Naive thymus-derived CD4-positive, alpha-beta T cell (primary cell): ENCODE measurements at regions of chr10 and their contacts with region 1.

Region 1: GRCh38 chr10:87817609-87818504 is at the start of gene ATAD1:
- DNase-seq: peak; percentile 79 to 93 (median 91)
- ATAC-seq: peak; percentile 92
- H3K4me3 ChIP-seq: peak within 1 kb of the TSS; percentile 75
- H3K4me3 Mint-ChIP-seq: peak within 1 kb of the TSS; percentile 90 to 100 (median 94)
- H3K27ac ChIP-seq: peak within 1 kb of the TSS; percentile 89
- H3K27ac Mint-ChIP-seq: peak within 1 kb of the TSS; percentile 93 to 100 (median 98)
- H3K4me1 ChIP-seq: peaks cover 13 to 33% of the 10 kb centered on the region in 2 donors
- H3K4me1 Mint-ChIP-seq: peaks cover 22 to 56% (median 41%) of the 10 kb centered on the region in 7 donors
- H3K27me3 ChIP-seq: no peaks in the 10 kb centered on the region
- H3K27me3 Mint-ChIP-seq: peaks cover 0 to 2% (median 0%) of the 10 kb centered on the region in 5 donors
- total RNA-seq, gene ATAD1: 33.5 to 53.4 (median 46.1) TPM

Region 2: GRCh38 chr10:86521678-86522509 is 1296.0 kb before region 1 on chr10 and contains the start of gene WAPL:
- CTCF ChIA-PET with region 1: no interaction called
- POLR2A ChIA-PET with region 1: no interaction called
- intact Hi-C with region 1: loop called in 1 of 2 experiments (anchors 1 kb)
- DNase-seq: peak; percentile 91 to 98 (median 94)
- ATAC-seq: peak; percentile 98
- H3K4me3 ChIP-seq: peak within 1 kb of the TSS; percentile 85
- H3K4me3 Mint-ChIP-seq: peak within 1 kb of the TSS; percentile 86 to 99 (median 96)
- H3K27ac ChIP-seq: peak within 1 kb of the TSS; percentile 97
- H3K27ac Mint-ChIP-seq: peak within 1 kb of the TSS; percentile 83 to 96 (median 94)
- H3K4me1 ChIP-seq: peaks cover 32 to 38% of the 10 kb centered on the region in 2 donors
- H3K4me1 Mint-ChIP-seq: peaks cover 41 to 75% (median 56%) of the 10 kb centered on the region in 7 donors
- H3K27me3 ChIP-seq: no peaks in the 10 kb centered on the region
- H3K27me3 Mint-ChIP-seq: no peaks in the 10 kb centered on the region
- total RNA-seq, gene WAPL: 40.3 to 59.2 (median 53.4) TPM

Region 3: GRCh38 chr10:87842776-87843497 is 25.1 kb after region 1 on chr10:
- CTCF ChIA-PET with region 1: no interaction called
- POLR2A ChIA-PET with region 1: interaction called, 6 read pairs
- intact Hi-C with region 1: loop called in 1 of 2 experiments (anchors 2 kb)
- DNase-seq: no peak
- ATAC-seq: no peak
- H3K4me3 ChIP-seq: no peak overlapping the region
- H3K4me3 Mint-ChIP-seq: peak overlapping the region in 1 of 10 donors; percentile 10
- H3K27ac ChIP-seq: no peak overlapping the region
- H3K27ac Mint-ChIP-seq: peak overlapping the region in 1 of 9 donors; percentile 74
- H3K4me1 ChIP-seq: no peaks in the 10 kb centered on the region
- H3K4me1 Mint-ChIP-seq: peaks cover 0 to 16% (median 0%) of the 10 kb centered on the region in 7 donors
- H3K27me3 ChIP-seq: no peaks in the 10 kb centered on the region
- H3K27me3 Mint-ChIP-seq: peaks cover 0 to 4% (median 0%) of the 10 kb centered on the region in 5 donors

Region 4: DNA sequence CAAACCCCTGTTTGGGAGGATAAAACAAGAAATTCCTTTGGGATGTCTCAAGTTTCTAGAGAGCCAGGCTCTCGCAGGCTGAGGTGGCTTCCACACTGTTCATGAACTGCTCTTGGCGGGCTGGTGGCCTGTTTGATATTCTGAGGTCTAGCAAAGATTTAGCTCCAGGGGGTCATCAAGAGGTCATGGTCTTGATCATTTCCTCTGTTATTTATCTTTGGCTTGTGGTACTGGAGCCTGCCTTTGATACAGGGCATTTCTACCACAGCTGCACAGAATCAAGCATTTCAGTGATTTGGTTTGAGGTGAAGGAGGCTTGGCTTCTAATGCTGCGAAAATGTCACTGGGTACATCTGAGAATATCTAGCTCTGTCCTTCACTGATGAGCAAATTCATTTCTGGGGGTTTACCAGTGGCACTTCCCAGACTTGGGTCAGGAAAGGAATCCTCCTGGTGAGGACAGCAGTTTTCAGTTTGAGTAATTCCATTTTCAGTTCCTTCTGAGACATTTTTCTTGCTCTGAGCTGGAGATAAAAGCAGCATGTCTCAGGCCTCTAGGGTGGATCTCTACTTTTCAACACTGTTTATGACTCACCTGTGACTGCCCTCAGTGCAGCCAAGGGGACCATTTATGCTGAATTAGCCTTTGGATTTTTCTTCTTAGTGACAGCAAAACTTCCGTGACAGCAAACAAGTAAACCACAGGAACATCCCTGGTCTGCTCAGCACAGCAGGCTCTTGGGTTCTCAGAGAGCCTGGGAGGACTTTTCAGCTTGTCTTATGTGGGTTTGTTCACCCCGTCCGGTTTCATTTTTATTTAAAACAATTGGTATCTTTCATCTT is 453.2 kb after region 1 on chr10:
- CTCF ChIA-PET with region 1: no interaction called
- POLR2A ChIA-PET with region 1: no interaction called
- intact Hi-C with region 1: loop called in 1 of 2 experiments (anchors 2 kb)
- DNase-seq: peak in 7 of 9 donors; percentile 8 to 54 (median 26)
- ATAC-seq: peak; percentile 79
- H3K4me3 ChIP-seq: peak overlapping the region; percentile 12
- H3K4me3 Mint-ChIP-seq: peak overlapping the region; percentile 29 to 78 (median 66)
- H3K27ac ChIP-seq: peak overlapping the region; percentile 33
- H3K27ac Mint-ChIP-seq: peak overlapping the region; percentile 44 to 89 (median 83)
- H3K4me1 ChIP-seq: peaks cover 13 to 18% of the 10 kb centered on the region in 2 donors
- H3K4me1 Mint-ChIP-seq: peaks cover 23 to 65% (median 38%) of the 10 kb centered on the region in 7 donors
- H3K27me3 ChIP-seq: no peaks in the 10 kb centered on the region
- H3K27me3 Mint-ChIP-seq: peaks cover 0 to 8% (median 0%) of the 10 kb centered on the region in 5 donors

Region 5: DNA sequence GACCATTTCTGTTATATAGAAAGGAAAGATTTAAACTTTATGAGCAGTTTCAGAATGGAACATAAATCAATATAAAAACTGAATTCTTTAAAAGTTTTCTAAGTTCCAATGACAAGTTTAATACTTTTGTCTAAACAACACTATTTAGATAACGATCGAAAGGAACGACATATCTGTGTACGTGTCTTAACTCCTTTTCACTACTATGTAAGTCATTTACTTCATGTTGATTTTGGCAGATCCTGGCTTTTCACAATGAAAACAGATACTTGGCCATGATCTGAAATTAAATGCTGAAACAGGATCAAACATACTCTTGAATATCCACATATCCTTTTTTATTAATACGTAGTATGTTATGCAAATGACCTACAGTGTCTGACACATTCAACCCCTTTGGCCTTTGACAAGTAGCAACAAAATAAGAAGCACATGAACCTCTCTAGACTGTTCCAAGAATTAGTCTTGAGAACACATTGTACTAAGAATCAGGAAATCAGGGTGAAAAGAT is 723.3 kb after region 1 on chr10:
- CTCF ChIA-PET with region 1: no interaction called
- POLR2A ChIA-PET with region 1: no interaction called
- intact Hi-C with region 1: no loop called
- DNase-seq: no peak
- ATAC-seq: no peak
- H3K4me3 ChIP-seq: no peak overlapping the region
- H3K4me3 Mint-ChIP-seq: no peak overlapping the region
- H3K27ac ChIP-seq: no peak overlapping the region
- H3K27ac Mint-ChIP-seq: no peak overlapping the region
- H3K4me1 ChIP-seq: no peaks in the 10 kb centered on the region
- H3K4me1 Mint-ChIP-seq: peaks cover 0 to 4% (median 0%) of the 10 kb centered on the region in 7 donors
- H3K27me3 ChIP-seq: no peaks in the 10 kb centered on the region
- H3K27me3 Mint-ChIP-seq: peaks cover 0 to 24% (median 0%) of the 10 kb centered on the region in 5 donors

Region 6: GRCh38 chr10:88880282-88881076 is 1062.6 kb after region 1 on chr10:
- CTCF ChIA-PET with region 1: no interaction called
- POLR2A ChIA-PET with region 1: interaction called, 4 read pairs
- intact Hi-C with region 1: loop called in 1 of 2 experiments (anchors 5 kb)
- DNase-seq: peak; percentile 58 to 79 (median 75)
- ATAC-seq: peak; percentile 84
- H3K4me3 ChIP-seq: peak overlapping the region; percentile 85
- H3K4me3 Mint-ChIP-seq: peak overlapping the region; percentile 95 to 100 (median 98)
- H3K27ac ChIP-seq: peak overlapping the region; percentile 74
- H3K27ac Mint-ChIP-seq: peak overlapping the region; percentile 82 to 97 (median 95)
- H3K4me1 ChIP-seq: peaks cover 43 to 44% of the 10 kb centered on the region in 2 donors
- H3K4me1 Mint-ChIP-seq: peaks cover 43 to 79% (median 69%) of the 10 kb centered on the region in 7 donors
- H3K27me3 ChIP-seq: no peaks in the 10 kb centered on the region
- H3K27me3 Mint-ChIP-seq: no peaks in the 10 kb centered on the region

Region 7: GRCh38 chr10:89414146-89414878 is 1596.5 kb after region 1 on chr10 and contains the start of gene IFIT5:
- CTCF ChIA-PET with region 1: no interaction called
- POLR2A ChIA-PET with region 1: no interaction called
- intact Hi-C with region 1: loop called in 1 of 2 experiments (anchors 2 kb)
- DNase-seq: peak; percentile 62 to 83 (median 76)
- ATAC-seq: peak; percentile 88
- H3K4me3 ChIP-seq: peak within 1 kb of the TSS; percentile 77
- H3K4me3 Mint-ChIP-seq: peak within 1 kb of the TSS; percentile 90 to 100 (median 96)
- H3K27ac ChIP-seq: peak within 1 kb of the TSS; percentile 94
- H3K27ac Mint-ChIP-seq: peak within 1 kb of the TSS; percentile 96 to 100 (median 98)
- H3K4me1 ChIP-seq: peaks cover 21% of the 10 kb centered on the region in 2 donors
- H3K4me1 Mint-ChIP-seq: peaks cover 26 to 75% (median 65%) of the 10 kb centered on the region in 7 donors
- H3K27me3 ChIP-seq: no peaks in the 10 kb centered on the region
- H3K27me3 Mint-ChIP-seq: no peaks in the 10 kb centered on the region
- total RNA-seq, gene IFIT5: 13.1 to 34.0 (median 24.8) TPM